ENCODE measurements at regions of chr1 and their contacts with region 1.

Region 1: DNA sequence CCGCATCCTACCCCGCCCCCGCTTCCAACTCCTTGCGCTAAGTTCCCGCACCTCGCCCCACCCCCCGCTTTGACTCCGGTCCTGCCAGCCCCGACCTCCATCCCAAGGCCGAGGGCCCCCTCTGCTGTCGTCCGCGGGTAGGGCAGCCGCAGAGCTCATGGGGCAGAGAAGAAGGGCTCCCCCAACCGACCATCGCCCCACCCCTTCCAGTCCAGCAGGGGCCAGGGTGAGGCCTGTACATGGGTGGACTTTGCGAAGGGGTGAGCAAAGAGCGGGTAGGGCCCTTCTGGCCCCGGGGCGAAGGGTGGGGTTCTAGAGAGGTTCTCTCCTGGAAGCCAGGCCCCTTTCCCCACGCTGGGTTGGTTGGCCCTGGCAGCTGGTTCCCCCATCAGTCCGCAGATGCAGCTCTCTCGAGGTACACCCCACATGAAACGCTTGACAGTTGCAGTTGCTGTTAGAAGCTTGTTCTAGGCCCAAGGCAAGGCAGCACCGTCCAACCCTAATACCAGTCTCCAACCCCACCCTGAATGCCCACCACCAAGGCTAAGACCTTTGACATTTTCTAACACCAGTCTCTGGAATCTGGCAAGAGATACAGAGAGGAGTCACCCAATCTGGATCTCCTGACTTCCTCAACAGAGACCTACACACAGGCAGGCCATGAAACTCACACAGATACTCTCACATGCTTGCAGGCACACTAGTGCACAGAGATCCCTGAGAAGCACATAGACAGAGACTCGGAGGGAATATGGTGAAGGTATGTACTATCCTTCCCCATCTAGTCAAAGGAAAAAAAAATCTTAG is 25.3 kb upstream of the ADGRB2 start:
- DNase-seq: peak; percentile 99
- ATAC-seq: peak; percentile 85
- H3K4me3 Mint-ChIP-seq: peak overlapping the region; percentile 75
- H3K27ac Mint-ChIP-seq: no peak overlapping the region
- H3K4me1 Mint-ChIP-seq: peaks cover 10% of the 10 kb centered on the region
- H3K27me3 Mint-ChIP-seq: no peaks in the 10 kb centered on the region

Region 2: DNA sequence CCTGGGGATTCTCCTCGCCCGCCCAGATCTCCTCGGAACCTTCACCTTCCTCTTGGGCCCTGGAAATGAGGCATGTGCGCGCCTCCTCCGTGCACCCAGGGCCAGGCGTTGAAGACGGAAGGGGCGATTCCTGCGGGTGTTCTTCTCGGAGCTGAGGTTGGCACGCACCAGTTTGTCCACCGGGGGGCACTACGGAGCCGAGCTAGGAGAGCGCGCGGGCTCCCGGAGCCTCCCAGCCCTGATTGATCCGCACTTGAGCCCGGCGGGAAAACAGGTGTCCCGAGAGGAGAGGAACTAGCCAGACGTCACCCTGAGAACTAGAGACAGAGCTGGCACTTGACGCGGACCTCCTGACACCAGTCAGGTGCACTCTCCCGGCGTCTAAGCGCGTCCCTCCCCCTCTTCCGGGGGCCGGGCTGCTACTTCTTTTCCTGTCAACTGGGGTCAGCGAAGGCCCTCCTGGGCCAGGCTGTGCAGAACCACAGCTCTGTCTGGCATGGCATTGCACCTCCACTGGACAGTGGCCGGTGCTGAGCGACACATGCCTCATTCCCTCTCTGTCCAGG is 394.8 kb before region 1 on chr1:
- CTCF ChIA-PET with region 1: no interaction called
- POLR2A ChIA-PET with region 1: no interaction called
- intact Hi-C with region 1: loop called in 1 of 2 experiments (anchors 2 kb)
- DNase-seq: peak; percentile 91
- ATAC-seq: peak; percentile 98
- H3K4me3 Mint-ChIP-seq: peak overlapping the region; percentile 70
- H3K27ac Mint-ChIP-seq: no peak overlapping the region
- H3K4me1 Mint-ChIP-seq: peaks cover 4% of the 10 kb centered on the region
- H3K27me3 Mint-ChIP-seq: no peaks in the 10 kb centered on the region

Region 3: DNA sequence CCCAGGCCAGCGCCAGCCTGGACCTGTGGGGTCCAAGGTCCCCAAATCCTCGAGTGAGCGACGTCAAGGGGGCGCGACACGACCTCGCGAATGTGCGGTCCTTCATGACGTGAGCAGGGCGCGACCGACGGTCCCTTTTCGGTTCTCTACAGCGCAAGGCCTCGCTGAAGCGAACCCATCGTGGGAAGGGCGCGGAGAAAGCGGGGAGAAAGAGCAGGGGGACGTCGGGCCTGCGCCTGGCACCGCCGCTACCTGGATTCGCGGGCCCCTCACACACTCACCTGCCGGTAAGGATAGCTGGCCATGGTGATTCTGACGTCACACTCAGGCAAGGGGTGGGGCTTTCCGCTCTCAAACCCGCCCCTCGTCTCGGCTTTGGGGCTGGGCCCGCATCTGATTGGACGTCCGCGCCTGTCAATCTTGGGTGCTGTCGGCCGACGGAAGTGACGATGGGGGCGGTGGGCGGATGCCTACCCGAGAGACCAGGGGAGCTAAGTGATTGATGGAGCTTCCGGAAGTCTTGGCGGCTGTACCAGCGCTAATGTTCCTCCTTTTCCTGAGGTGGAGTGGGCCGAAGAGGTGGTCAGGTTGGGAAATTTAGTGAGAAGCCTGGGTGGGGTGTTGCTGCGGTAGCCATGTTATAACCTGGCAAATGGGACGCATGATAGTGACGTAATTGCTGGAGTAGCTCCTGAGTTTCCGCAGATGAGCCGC is 144.7 kb before region 1 on chr1 and contains the start of gene PEF1:
- CTCF ChIA-PET with region 1: interaction called, 20 read pairs
- POLR2A ChIA-PET with region 1: interaction called, 10 read pairs
- intact Hi-C with region 1: loop called in 1 of 2 experiments (anchors 1 kb)
- DNase-seq: peak; percentile 100
- ATAC-seq: peak; percentile 91
- H3K4me3 Mint-ChIP-seq: peak within 1 kb of the TSS; percentile 95
- H3K27ac Mint-ChIP-seq: peak within 1 kb of the TSS; percentile 100
- H3K4me1 Mint-ChIP-seq: peaks cover 23% of the 10 kb centered on the region
- H3K27me3 Mint-ChIP-seq: no peaks in the 10 kb centered on the region
- total RNA-seq, gene PEF1: 48.8 to 59.3 TPM

Region 4: DNA sequence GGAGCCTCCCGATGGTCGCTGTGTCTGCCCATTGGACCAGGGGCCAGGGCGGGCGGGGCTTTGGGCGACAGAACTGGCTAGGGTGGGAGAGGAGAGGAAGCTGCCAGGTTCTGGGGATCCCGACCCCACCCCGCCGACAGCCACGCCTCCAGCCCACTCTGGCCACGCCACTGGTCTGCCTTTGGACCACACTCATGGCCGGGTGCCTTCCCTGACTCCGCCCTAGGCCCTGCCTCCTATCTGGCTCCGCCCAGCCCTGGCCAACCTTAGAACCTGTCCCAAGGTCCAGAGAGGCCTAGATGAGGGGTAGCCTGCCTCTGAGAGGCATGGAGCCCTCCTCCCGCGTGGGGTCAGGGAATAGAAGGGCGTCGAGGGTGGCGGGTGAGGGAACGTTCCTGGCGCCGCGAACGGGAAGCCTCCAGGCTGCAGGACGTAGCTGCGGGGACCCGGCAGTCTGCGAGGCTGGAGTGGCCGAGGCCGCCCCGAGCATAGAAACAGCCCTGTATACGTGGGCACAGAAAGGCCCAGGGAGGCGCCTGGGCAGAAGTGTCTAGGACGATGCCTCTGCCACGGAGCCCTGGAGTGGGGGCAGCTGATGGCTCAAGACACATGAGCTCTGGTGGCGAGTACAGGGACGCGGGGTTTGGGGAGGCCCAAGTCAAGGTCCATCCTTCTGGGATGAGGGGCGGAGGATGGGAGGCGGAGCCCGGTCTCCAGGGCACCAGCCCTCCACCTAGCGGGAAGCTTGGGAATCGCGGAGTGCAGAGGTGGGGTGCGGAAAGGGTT is 74.2 kb before region 1 on chr1:
- CTCF ChIA-PET with region 1: interaction called, 5 read pairs
- POLR2A ChIA-PET with region 1: no interaction called
- intact Hi-C with region 1: loop called (anchors 1 to 2 kb)
- DNase-seq: peak; percentile 68
- ATAC-seq: peak; percentile 69
- H3K4me3 Mint-ChIP-seq: peak overlapping the region; percentile 44
- H3K27ac Mint-ChIP-seq: no peak overlapping the region
- H3K4me1 Mint-ChIP-seq: peaks cover 12% of the 10 kb centered on the region
- H3K27me3 Mint-ChIP-seq: peaks cover 41% of the 10 kb centered on the region

Region 5: DNA sequence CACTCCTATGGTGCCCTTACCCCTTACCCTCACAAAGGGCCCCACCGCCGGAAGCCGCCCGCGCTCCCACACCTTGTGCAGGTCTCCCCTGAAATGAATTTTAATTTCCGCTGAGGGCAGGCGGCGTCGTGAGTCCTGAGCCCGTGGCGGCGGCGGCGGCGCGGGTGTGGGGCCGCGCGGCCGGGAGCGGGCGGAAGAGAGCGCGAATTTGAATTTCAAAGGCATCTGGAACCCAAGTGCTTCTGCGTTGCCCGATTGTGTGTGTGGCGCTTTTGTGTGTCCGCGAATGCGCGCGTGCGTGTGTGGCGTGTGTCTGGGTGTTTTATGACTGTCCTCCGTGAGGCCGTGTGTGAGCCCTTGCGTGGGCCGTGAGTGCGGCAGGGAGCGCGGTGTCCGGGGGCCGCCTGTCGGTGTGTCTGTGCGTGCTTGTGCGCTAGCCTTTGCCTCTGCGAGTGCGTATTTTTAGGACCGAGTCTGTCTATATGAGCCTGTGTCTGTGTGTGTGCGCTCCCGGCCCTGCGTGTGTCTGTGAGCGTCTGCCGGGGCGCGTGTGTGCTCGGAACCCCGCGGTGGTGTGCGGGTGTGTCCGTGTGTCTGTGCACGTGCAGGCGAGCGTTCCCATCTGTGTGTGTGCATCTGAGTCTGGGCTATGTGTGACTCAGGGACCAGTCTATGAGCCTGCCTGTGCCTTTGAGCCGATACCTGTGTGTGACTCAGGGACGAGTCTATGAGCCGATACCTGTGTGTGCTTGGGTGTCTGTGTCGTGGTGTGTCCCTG is 17.4 kb before region 1 on chr1:
- CTCF ChIA-PET with region 1: interaction called, 15 read pairs
- POLR2A ChIA-PET with region 1: no interaction called
- intact Hi-C with region 1: loop called in 1 of 2 experiments (anchors 1 kb)
- DNase-seq: peak; percentile 79
- ATAC-seq: peak; percentile 78
- H3K4me3 Mint-ChIP-seq: peak overlapping the region; percentile 74
- H3K27ac Mint-ChIP-seq: peak overlapping the region; percentile 96
- H3K4me1 Mint-ChIP-seq: peaks cover 61% of the 10 kb centered on the region
- H3K27me3 Mint-ChIP-seq: peaks cover 29% of the 10 kb centered on the region

Region 6: GRCh38 chr1:32005522-32005921 is 216.1 kb after region 1 on chr1:
- CTCF ChIA-PET with region 1: interaction called, 10 read pairs
- POLR2A ChIA-PET with region 1: no interaction called
- intact Hi-C with region 1: no loop called
- DNase-seq: no peak
- ATAC-seq: no peak
- H3K4me3 Mint-ChIP-seq: no peak overlapping the region
- H3K27ac Mint-ChIP-seq: no peak overlapping the region
- H3K4me1 Mint-ChIP-seq: peaks cover 7% of the 10 kb centered on the region
- H3K27me3 Mint-ChIP-seq: no peaks in the 10 kb centered on the region

Measured in activated CD4-positive, alpha-beta T cell treated with anti-CD3 and anti-CD28 coated beads for 36 hours (primary cell).